Naive thymus-derived CD4-positive, alpha-beta T cell (primary cell): ENCODE measurements at regions of chr10 and their contacts with region 1.

Region 1: GRCh38 chr10:102480396-102480795 is 22.1 kb downstream of the ACTR1A start:
- DNase-seq: no peak
- ATAC-seq: no peak
- H3K4me3 ChIP-seq: no peak overlapping the region
- H3K4me3 Mint-ChIP-seq: no peak overlapping the region
- H3K27ac ChIP-seq: no peak overlapping the region
- H3K27ac Mint-ChIP-seq: no peak overlapping the region
- H3K4me1 ChIP-seq: peaks cover 0 to 4% of the 10 kb centered on the region in 2 donors
- H3K4me1 Mint-ChIP-seq: peaks cover 5 to 26% (median 15%) of the 10 kb centered on the region in 7 donors
- H3K27me3 ChIP-seq: no peaks in the 10 kb centered on the region
- H3K27me3 Mint-ChIP-seq: no peaks in the 10 kb centered on the region

Region 2: DNA sequence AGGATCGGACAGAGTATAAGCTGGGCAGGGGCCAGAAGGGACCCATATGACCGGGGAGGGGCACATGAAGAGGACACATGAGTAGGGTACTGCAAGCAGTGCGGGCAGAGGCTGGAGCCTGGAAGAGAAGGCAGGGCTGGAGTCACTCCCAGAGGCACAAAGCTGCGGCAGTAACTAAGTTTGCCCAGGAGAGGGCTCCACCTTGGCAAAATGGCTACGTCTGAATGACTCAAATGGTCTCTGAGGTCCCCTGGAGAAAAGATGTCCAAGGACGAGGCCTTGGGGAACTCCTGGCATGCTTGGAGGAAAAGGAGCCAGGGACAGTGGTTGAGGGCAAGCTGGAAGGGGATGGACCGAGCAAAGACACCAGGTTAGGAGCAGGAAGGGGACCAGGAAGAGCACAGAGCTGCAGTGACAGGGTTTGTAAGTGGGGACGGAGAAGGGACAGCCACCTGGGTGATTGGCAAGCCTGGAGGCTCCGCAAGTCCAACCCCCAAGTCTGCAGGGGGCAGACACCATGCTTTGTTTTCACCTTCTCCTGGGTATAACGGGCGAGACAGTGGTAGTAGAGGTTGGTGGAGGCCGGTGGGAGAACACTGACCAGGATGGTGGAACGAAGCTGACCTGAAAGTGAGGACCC is 1208.0 kb before region 1 on chr10:
- CTCF ChIA-PET with region 1: no interaction called
- POLR2A ChIA-PET with region 1: no interaction called
- intact Hi-C with region 1: no loop called
- DNase-seq: peak in 8 of 9 donors; percentile 18 to 57 (median 44)
- ATAC-seq: peak; percentile 81
- H3K4me3 ChIP-seq: no peak overlapping the region
- H3K4me3 Mint-ChIP-seq: no peak overlapping the region
- H3K27ac ChIP-seq: no peak overlapping the region
- H3K27ac Mint-ChIP-seq: no peak overlapping the region
- H3K4me1 ChIP-seq: no peaks in the 10 kb centered on the region
- H3K4me1 Mint-ChIP-seq: peaks cover 0 to 8% (median 2%) of the 10 kb centered on the region in 7 donors
- H3K27me3 ChIP-seq: no peaks in the 10 kb centered on the region
- H3K27me3 Mint-ChIP-seq: peaks cover 20 to 39% (median 32%) of the 10 kb centered on the region in 5 donors

Region 3: DNA sequence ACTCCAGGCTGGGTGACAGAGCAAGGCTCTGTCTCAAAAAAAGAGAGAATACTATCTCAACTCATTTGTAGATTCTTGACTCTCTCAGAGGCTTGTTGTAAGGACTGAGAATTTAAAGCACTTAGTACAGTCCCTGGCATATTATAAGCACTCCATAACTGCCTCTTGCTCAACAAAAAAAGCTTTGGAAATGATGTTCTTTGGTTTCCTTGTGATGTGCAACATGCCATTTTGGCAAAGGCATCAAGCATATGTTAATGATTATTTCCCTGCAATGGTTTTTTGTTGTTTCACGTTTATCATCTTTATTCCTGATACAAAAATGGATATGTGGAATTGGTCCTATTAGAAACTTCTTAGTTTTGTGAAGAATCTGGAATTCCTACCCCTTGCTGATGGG is 312.5 kb before region 1 on chr10:
- CTCF ChIA-PET with region 1: no interaction called
- POLR2A ChIA-PET with region 1: no interaction called
- intact Hi-C with region 1: loop called (anchors 1 kb)
- DNase-seq: no peak
- ATAC-seq: no peak
- H3K4me3 ChIP-seq: no peak overlapping the region
- H3K4me3 Mint-ChIP-seq: peak overlapping the region in 1 of 10 donors; percentile 45
- H3K27ac ChIP-seq: no peak overlapping the region
- H3K27ac Mint-ChIP-seq: no peak overlapping the region
- H3K4me1 ChIP-seq: peaks cover 0 to 8% of the 10 kb centered on the region in 2 donors
- H3K4me1 Mint-ChIP-seq: peaks cover 0 to 20% (median 8%) of the 10 kb centered on the region in 7 donors
- H3K27me3 ChIP-seq: no peaks in the 10 kb centered on the region
- H3K27me3 Mint-ChIP-seq: peaks cover 0 to 5% (median 0%) of the 10 kb centered on the region in 5 donors

Region 4: DNA sequence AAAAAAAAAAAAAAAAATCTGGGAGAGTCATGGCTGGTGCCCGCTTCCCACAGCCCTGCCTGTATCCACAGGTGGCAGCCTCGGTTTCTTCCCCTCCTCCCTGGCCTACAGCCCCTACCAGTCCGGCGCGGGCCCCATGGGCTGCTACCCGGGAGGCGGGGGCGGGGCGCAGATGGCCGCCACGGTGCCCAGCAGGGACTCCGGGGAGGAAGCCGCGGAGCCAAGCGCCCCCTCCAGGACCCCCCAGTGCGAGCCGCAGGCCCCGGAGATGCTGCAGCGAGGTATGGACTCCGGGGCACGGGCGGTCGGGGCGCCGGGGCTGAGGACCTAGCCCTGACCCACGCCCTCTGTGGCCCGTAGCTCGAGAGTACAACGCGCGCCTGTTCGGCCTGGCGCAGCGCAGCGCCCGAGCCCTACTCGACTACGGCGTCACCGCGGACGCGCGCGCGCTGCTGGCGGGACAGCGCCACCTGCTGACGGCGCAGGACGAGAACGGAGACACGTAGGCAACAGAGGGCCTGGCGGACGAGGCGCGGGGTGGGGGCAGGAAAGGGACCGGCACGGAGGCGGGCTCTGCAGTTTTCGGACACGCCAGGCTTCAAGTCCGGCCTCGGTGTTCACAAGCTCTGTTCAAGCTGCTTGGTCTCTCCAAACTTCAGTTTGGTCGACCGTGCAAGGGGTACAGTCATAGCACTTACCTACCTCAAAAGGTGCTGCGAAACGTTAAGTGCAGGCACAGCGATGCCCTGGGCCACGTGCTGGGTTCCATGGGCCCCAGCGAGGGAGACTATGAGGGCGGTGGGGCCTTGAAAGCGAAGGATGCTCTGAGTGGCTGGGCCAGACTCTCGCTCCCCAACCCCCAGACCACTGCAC is 80.9 kb before region 1 on chr10:
- CTCF ChIA-PET with region 1: interaction called, 23 read pairs
- POLR2A ChIA-PET with region 1: interaction called, 5 read pairs
- intact Hi-C with region 1: loop called (anchors 1 kb)
- DNase-seq: peak; percentile 80 to 93 (median 88)
- ATAC-seq: peak; percentile 74
- H3K4me3 ChIP-seq: peak overlapping the region; percentile 56
- H3K4me3 Mint-ChIP-seq: peak overlapping the region; percentile 62 to 83 (median 76)
- H3K27ac ChIP-seq: peak overlapping the region; percentile 93
- H3K27ac Mint-ChIP-seq: peak overlapping the region; percentile 46 to 100 (median 88)
- H3K4me1 ChIP-seq: peaks cover 20 to 26% of the 10 kb centered on the region in 2 donors
- H3K4me1 Mint-ChIP-seq: peaks cover 15 to 42% (median 35%) of the 10 kb centered on the region in 7 donors
- H3K27me3 ChIP-seq: no peaks in the 10 kb centered on the region
- H3K27me3 Mint-ChIP-seq: no peaks in the 10 kb centered on the region

Region 5: DNA sequence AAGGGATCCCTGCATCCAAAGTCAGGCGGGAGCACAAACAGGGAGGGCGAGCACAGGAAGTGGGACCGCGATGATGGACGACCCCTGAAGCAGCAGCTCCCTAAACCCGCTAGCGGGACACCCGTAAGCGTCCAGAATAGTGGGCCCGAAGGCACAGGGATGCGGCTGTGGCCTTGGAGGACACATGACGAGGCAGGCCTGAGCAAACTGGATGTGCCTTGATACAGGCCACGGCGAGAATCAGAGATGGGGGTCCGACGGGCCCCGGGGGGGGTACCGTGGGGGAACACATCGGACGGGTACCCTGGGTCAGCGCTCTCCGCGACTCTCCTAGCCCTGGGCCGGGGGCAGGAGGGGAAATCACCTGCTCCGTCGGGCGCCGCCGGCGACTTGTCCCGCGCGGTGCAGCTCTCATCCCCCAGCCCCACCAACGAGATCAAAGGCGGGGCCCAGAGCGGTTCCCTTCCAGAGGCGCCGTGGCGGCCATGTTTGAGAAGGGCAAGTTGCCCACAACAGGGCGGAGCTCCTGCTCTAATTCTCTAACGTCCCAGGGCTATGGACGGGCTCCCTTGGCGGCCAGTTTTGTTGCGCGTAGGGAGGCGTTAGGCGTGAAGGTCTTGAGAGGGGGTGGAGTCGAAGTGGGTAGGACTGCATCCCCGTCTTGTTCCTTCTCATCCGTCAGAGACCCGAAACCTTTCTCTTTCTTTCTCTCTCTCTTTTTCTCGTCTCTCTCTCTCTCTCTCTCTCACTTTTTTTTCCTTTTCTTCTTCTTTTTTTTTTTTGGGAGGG is 48.0 kb before region 1 on chr10 and contains the start of gene CUEDC2:
- CTCF ChIA-PET with region 1: no interaction called
- POLR2A ChIA-PET with region 1: interaction called, 4 read pairs
- intact Hi-C with region 1: loop called (anchors 1 kb)
- DNase-seq: peak; percentile 86 to 97 (median 91)
- ATAC-seq: peak; percentile 98
- H3K4me3 ChIP-seq: peak within 1 kb of the TSS; percentile 96
- H3K4me3 Mint-ChIP-seq: peak within 1 kb of the TSS; percentile 81 to 96 (median 93)
- H3K27ac ChIP-seq: peak within 1 kb of the TSS; percentile 80
- H3K27ac Mint-ChIP-seq: peak within 1 kb of the TSS; percentile 90 to 97 (median 94)
- H3K4me1 ChIP-seq: peaks cover 28 to 49% of the 10 kb centered on the region in 2 donors
- H3K4me1 Mint-ChIP-seq: peaks cover 38 to 60% (median 48%) of the 10 kb centered on the region in 7 donors
- H3K27me3 ChIP-seq: no peaks in the 10 kb centered on the region
- H3K27me3 Mint-ChIP-seq: no peaks in the 10 kb centered on the region
- total RNA-seq, gene CUEDC2: 27.0 to 69.0 (median 31.9) TPM

Region 6: GRCh38 chr10:102461187-102462054 is 19.0 kb before region 1 on chr10:
- CTCF ChIA-PET with region 1: interaction called, 5 read pairs
- POLR2A ChIA-PET with region 1: interaction called, 3 read pairs
- intact Hi-C with region 1: loop called in 1 of 2 experiments (anchors 2 kb)
- DNase-seq: peak; percentile 84 to 95 (median 90)
- ATAC-seq: peak; percentile 99
- H3K4me3 ChIP-seq: peak overlapping the region; percentile 93
- H3K4me3 Mint-ChIP-seq: peak overlapping the region; percentile 83 to 96 (median 92)
- H3K27ac ChIP-seq: peak overlapping the region; percentile 74
- H3K27ac Mint-ChIP-seq: peak overlapping the region; percentile 72 to 90 (median 85)
- H3K4me1 ChIP-seq: peaks cover 9 to 14% of the 10 kb centered on the region in 2 donors
- H3K4me1 Mint-ChIP-seq: peaks cover 19 to 40% (median 34%) of the 10 kb centered on the region in 7 donors
- H3K27me3 ChIP-seq: no peaks in the 10 kb centered on the region
- H3K27me3 Mint-ChIP-seq: peaks cover 0 to 2% (median 0%) of the 10 kb centered on the region in 5 donors

Region 7: GRCh38 chr10:102511583-102512274 is 31.3 kb after region 1 on chr10:
- CTCF ChIA-PET with region 1: no interaction called
- POLR2A ChIA-PET with region 1: no interaction called
- intact Hi-C with region 1: no loop called
- DNase-seq: no peak
- ATAC-seq: peak; percentile 63
- H3K4me3 ChIP-seq: no peak overlapping the region
- H3K4me3 Mint-ChIP-seq: no peak overlapping the region
- H3K27ac ChIP-seq: no peak overlapping the region
- H3K27ac Mint-ChIP-seq: peak overlapping the region in 8 of 9 donors; percentile 3 to 86 (median 60)
- H3K4me1 ChIP-seq: peaks cover 0 to 8% of the 10 kb centered on the region in 2 donors
- H3K4me1 Mint-ChIP-seq: peaks cover 12 to 35% (median 28%) of the 10 kb centered on the region in 7 donors
- H3K27me3 ChIP-seq: no peaks in the 10 kb centered on the region
- H3K27me3 Mint-ChIP-seq: no peaks in the 10 kb centered on the region

Region 8: DNA sequence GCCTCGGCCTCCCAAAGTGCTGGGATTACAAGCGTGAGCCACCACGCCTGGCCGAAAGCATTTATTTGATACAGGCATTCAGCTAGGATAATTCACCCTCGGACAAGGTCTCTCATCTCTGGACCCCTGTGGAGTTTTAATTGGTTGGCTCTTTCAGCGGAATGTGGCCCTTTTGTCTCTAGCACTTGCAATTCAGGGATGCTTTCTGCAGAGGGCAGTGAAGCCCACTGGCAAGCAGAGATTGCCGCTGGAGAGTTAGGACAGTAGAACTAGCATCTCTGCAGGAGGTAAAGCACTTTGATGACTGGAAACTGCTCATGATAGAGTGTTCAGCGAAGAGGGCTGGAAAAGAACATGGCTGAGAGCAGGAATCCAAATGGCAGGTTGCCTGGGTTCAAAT is 85.4 kb after region 1 on chr10:
- CTCF ChIA-PET with region 1: no interaction called
- POLR2A ChIA-PET with region 1: no interaction called
- intact Hi-C with region 1: no loop called
- DNase-seq: no peak
- ATAC-seq: no peak
- H3K4me3 ChIP-seq: no peak overlapping the region
- H3K4me3 Mint-ChIP-seq: no peak overlapping the region
- H3K27ac ChIP-seq: no peak overlapping the region
- H3K27ac Mint-ChIP-seq: no peak overlapping the region
- H3K4me1 ChIP-seq: no peaks in the 10 kb centered on the region
- H3K4me1 Mint-ChIP-seq: peaks cover 0 to 16% (median 4%) of the 10 kb centered on the region in 7 donors
- H3K27me3 ChIP-seq: no peaks in the 10 kb centered on the region
- H3K27me3 Mint-ChIP-seq: no peaks in the 10 kb centered on the region